ENCODE measurements at regions of chr19 and their contacts with region 1.

Region 1: GRCh38 chr19:54481322-54481930 is 8.3 kb upstream of the CDC42EP5 start:
- DNase-seq: no peak
- H3K4me3 Mint-ChIP-seq: no peak overlapping the region
- H3K27ac Mint-ChIP-seq: no peak overlapping the region
- H3K4me1 Mint-ChIP-seq: peaks cover 26% of the 10 kb centered on the region
- H3K27me3 Mint-ChIP-seq: peaks cover 32% of the 10 kb centered on the region

Region 2: DNA sequence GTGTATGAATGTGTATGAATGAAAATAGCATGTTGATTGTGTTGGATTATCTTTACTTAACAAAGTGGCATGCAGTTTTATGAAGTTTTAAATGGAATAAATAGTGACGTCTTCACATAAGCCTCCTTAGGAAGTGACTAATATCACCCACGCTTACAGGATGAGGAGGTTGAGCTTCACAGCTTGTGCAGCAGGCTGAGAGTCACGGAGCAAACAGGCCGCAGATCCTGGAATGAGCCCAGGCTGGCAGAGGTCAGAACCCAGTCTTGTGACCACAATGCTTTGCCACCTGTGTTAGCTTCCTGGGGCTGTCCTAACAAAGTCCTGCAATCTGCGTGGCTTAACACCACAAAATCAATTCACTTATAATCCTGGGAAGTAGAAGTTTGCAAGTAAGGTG is 42.0 kb after region 1 on chr19:
- intact Hi-C with region 1: loop called (anchors 5 kb)
- DNase-seq: peak; percentile 48
- H3K4me3 Mint-ChIP-seq: peak overlapping the region; percentile 43
- H3K27ac Mint-ChIP-seq: peak overlapping the region; percentile 83
- H3K4me1 Mint-ChIP-seq: peaks cover 59% of the 10 kb centered on the region
- H3K27me3 Mint-ChIP-seq: no peaks in the 10 kb centered on the region

Region 3: DNA sequence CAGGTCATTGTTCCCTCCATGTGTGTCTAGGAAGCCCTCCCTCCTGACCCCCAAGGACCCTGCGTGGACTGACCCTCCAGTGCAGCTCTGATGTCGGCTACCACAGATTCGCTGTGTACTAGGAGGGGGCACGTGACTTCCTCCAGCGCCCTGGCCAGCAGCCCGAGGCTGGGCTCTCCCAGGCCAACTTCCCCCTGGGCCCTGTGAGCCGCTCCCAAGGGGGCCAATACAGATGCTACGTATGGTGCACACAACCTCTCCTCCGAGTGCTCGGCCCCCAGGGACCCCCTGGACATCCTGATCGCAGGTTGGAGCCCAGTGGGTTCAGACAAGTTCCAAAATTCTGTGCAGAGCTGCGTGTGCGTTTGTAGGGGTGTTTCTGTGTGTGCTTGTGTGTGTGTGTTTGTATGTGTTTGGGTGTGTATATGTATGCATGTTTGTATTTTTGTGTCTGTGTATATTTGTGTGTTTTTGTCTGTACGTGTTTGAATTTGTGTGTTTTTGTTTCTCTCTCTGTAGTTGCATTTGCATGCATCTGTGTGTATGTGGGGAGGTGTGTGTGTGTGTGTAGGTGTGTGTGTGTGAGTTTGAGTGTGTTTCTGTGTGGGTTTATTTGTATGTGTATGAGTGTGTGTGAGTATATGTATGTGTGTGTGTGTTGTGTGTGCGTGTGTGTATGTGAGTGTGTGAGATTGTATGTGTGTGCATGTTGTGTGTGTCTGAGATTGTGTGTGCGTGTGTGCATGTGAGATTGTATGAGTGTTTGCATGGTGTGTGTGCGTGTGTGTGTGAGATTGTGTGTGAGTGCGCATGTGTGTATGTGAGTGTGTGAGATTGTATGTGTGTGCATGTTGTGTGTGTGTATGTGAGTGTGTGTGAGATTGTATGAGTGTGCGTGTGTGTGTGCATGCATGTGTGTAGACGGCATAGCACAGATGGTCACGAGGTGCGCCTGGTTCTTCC is 70.8 kb after region 1 on chr19:
- intact Hi-C with region 1: loop called (anchors 10 kb)
- DNase-seq: no peak
- H3K4me3 Mint-ChIP-seq: no peak overlapping the region
- H3K27ac Mint-ChIP-seq: no peak overlapping the region
- H3K4me1 Mint-ChIP-seq: peaks cover 4% of the 10 kb centered on the region
- H3K27me3 Mint-ChIP-seq: peaks cover 2% of the 10 kb centered on the region

Region 4: DNA sequence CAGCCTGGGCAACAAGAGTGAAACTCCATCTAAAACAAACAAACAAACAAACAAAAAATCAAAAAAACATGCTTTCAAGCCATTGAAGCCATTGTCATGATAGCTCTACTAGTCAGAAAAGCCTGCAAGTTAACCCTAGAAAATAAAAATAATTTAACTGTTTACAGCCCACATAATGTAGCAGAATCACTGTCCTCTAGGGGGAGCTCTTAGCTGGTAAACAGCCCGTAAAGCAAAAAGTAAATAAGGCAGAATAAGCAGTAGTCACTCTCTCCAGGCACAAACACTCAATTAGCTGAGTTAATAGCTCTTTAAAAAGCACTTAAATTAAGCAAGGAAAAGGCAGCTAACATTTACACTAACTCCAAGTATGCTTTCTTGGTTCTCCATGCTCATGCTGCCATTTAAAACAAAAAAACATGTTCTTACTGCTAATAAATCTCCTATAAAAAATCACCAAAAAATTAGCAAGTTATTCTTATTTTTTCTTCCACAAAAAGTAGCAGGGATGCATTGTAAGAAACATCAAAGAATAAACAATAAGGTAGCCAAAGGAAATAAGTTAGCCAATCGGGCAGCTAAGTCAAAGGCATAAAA is 192.7 kb after region 1 on chr19:
- intact Hi-C with region 1: loop called (anchors 1 kb)
- DNase-seq: no peak
- H3K4me3 Mint-ChIP-seq: no peak overlapping the region
- H3K27ac Mint-ChIP-seq: no peak overlapping the region
- H3K4me1 Mint-ChIP-seq: no peaks in the 10 kb centered on the region
- H3K27me3 Mint-ChIP-seq: peaks cover 3% of the 10 kb centered on the region

Measured in activated T-helper 2 cell treated with anti-CD3 and anti-CD28 coated beads, Interferon-gamma antibody, Interleukin-2, Interleukin-4, amounts not matched to agents 10 μg/mL and 5 μg/mL and 100 μg/mL, durations not matched to agents 14 hours and 24 hours and 36 hours (primary cell).